ENCODE measurements at regions of chr17 and their contacts with region 1.

Region 1: GRCh38 chr17:48724251-48725003 is 1.4 kb downstream of the PRAC2 start:
- DNase-seq: peak; percentile 66 to 88 (median 74)
- H3K4me3 ChIP-seq: no peak overlapping the region
- H3K27ac ChIP-seq: no peak overlapping the region
- H3K4me1 ChIP-seq: no peaks in the 10 kb centered on the region
- H3K27me3 ChIP-seq: peaks cover 3% of the 10 kb centered on the region
- CTCF ChIP-seq: peak in 2 of 3 donors; percentile 24 to 33
- EP300 ChIP-seq: no peak
- POLR2A ChIP-seq: no peak

Region 2: GRCh38 chr17:48791128-48792032 is 67.0 kb after region 1 on chr17:
- intact Hi-C with region 1: loop called in 1 of 4 experiments (anchors 10 kb)
- DNase-seq: peak; percentile 27 to 68 (median 39)
- H3K4me3 ChIP-seq: no peak overlapping the region
- H3K27ac ChIP-seq: no peak overlapping the region
- H3K4me1 ChIP-seq: no peaks in the 10 kb centered on the region
- H3K27me3 ChIP-seq: no peaks in the 10 kb centered on the region
- CTCF ChIP-seq: no peak
- EP300 ChIP-seq: no peak
- POLR2A ChIP-seq: no peak

Region 3: GRCh38 chr17:49414622-49415350 is 690.4 kb after region 1 on chr17 and contains the start of gene PHB1:
- intact Hi-C with region 1: loop called in 1 of 4 experiments (anchors 5 kb)
- DNase-seq: peak; percentile 93 to 96 (median 93)
- H3K4me3 ChIP-seq: peak within 1 kb of the TSS; percentile 87
- H3K27ac ChIP-seq: no peak within 1 kb of the TSS
- H3K4me1 ChIP-seq: peaks cover 2% of the 10 kb centered on the region
- H3K27me3 ChIP-seq: no peaks in the 10 kb centered on the region
- CTCF ChIP-seq: no peak
- EP300 ChIP-seq: no peak
- POLR2A ChIP-seq: no peak
- total RNA-seq, gene PHB1: 46.0 to 132 (median 106) TPM

Measured in ovary (tissue), 10 donors.